Heart left ventricle (tissue), 16 donors: ENCODE measurements at regions of chr6 and their contacts with region 1.

Region 1: DNA sequence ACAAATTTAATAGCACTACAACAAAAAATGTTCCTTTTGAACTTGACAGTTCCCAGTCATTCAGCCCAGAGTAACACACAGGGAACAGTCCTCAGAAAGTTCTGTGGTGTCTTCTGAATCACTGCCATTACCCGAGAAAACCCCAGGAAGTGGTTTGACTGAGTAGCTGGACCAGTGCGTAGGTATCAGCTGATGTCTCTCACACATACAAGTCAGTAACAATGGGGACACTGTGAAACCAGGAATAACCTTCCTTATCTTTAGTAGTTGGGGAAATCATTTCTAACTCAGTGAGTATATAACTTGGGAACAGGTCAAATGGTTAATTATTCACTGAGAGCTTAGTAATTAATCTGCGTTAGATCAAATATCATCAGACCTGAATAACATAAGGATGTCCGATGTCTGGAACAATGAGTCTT is 73.1 kb downstream of the HIVEP2 start:
- DNase-seq: peak in 3 of 5 donors; percentile 47 to 51 (median 48)
- ATAC-seq: peak; percentile 84 to 91 (median 91)
- H3K4me3 ChIP-seq: peak overlapping the region in 1 of 12 donors; percentile 6
- H3K27ac ChIP-seq: peak overlapping the region; percentile 37 to 84 (median 62)
- H3K4me1 ChIP-seq: peaks cover 7 to 81% (median 56%) of the 10 kb centered on the region in 12 donors
- H3K27me3 ChIP-seq: no peaks in the 10 kb centered on the region
- CTCF ChIP-seq: no peak
- POLR2A ChIP-seq: no peak

Region 2: DNA sequence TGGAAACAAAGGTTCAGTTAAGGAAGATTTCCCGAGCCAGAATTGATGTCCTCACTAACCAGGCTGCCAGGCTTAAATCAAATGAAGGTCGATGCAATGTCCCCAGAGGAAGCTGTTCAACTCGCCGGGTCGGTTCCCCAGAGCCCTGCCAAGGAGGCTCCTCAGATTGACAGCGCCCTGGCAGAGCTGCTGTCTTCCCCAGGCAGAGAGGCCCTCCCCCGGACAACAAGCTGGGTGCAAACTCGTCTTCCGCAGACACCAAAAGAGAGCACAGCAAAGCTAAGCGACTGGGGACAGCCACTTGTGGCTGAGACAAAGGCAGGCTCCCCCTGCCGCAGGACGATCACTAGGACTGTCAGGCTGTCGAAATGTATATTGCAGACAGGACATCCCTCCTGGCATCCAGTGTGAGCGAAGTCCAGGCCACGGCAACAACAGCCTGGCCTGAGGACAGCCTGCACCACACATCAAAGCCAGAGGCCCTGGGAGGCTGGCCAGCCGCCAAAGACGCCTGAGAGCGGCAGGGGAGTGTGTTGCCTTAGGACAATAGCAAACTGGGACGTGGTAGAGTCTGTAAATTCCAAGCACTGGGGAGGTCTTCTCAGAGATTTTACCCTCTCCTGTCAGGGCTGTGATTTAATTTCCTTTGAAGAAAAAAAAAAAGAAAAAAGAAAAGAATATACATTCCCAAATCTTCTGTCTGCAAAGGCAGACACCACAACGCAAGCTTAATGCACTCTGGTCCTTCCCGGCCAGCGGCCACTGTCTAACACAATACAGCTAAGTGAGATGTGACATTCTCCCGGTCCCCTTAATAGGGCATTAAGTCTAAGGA is 26.1 kb before region 1 on chr6:
- intact Hi-C with region 1: loop called in 1 of 10 experiments (anchors 2 kb)
- DNase-seq: peak; percentile 91 to 96 (median 95)
- ATAC-seq: peak; percentile 95 to 97 (median 96)
- H3K4me3 ChIP-seq: peak overlapping the region in 10 of 12 donors; percentile 23 to 53 (median 42)
- H3K27ac ChIP-seq: peak overlapping the region; percentile 69 to 89 (median 86)
- H3K4me1 ChIP-seq: peaks cover 11 to 96% (median 78%) of the 10 kb centered on the region in 12 donors
- H3K27me3 ChIP-seq: no peaks in the 10 kb centered on the region
- CTCF ChIP-seq: peak in 4 of 12 donors; percentile 7 to 28 (median 26)
- POLR2A ChIP-seq: peak in 1 of 2 donors; percentile 63

Region 3: DNA sequence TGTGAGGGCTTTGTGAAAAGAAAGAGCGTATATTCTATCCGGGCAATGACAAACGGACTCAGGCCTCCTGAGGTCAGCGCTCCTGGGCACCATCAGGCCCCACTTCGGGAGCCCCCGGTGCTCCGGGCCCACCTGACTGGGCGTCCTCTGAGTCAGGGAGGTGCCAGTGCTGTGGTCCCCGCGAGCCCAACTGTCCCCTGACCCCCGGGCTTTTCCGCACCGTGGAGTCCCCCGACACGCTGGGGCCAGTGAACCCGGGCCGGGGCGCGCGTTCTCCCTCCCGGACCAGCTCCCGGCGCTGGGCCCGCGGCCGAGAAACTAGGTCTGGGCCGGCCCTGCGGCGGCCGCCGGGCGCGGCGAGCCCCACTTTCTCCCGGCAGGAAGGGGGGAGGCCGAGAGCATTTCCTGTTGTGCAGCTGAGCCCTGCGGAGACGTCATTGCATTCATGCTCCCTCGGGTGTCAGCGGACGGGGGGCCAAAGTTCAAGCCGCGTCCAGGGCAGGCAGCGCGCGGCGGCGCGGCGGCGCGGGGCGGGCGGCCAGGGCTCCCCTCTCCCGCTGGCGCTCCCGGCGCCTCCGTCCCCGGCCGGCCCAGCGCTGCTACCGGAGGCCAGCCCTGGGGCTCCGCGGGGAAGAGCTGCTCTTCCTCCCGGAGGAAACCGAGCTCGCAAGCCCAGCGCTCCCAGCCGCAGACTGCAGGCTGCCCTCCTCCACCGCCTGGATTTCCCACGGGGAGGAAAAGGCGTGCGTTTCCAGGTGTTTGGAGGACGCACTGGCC is 54.8 kb after region 1 on chr6:
- intact Hi-C with region 1: loop called in 1 of 10 experiments (anchors 5 kb)
- DNase-seq: peak; percentile 91 to 94 (median 93)
- ATAC-seq: peak; percentile 79 to 95 (median 93)
- H3K4me3 ChIP-seq: peak overlapping the region; percentile 49 to 87 (median 68)
- H3K27ac ChIP-seq: peak overlapping the region; percentile 92 to 98 (median 96)
- H3K4me1 ChIP-seq: peaks cover 7 to 47% (median 32%) of the 10 kb centered on the region in 12 donors
- H3K27me3 ChIP-seq: no peaks in the 10 kb centered on the region
- CTCF ChIP-seq: no peak
- POLR2A ChIP-seq: peak in 1 of 2 donors; percentile 48